Activated CD4-positive, alpha-beta T cell treated with anti-CD3 and anti-CD28 coated beads, Interleukin-2, amount 10 ng/mL, durations not matched to agents 24 days and 14 days (primary cell): ENCODE measurements at regions of chr16 and their contacts with region 1.

Region 1: GRCh38 chr16:87203060-87203656 is 114.0 kb downstream of the C16orf95 start:
- DNase-seq: peak; percentile 85
- H3K4me3 Mint-ChIP-seq: no peak overlapping the region
- H3K27ac Mint-ChIP-seq: no peak overlapping the region
- H3K4me1 Mint-ChIP-seq: peaks cover 2% of the 10 kb centered on the region
- H3K27me3 Mint-ChIP-seq: peaks cover 6% of the 10 kb centered on the region

Region 2: GRCh38 chr16:87278191-87279095 is 75.3 kb after region 1 on chr16:
- intact Hi-C with region 1: loop called (anchors 1 kb)
- DNase-seq: peak; percentile 86
- H3K4me3 Mint-ChIP-seq: no peak overlapping the region
- H3K27ac Mint-ChIP-seq: no peak overlapping the region
- H3K4me1 Mint-ChIP-seq: peaks cover 11% of the 10 kb centered on the region
- H3K27me3 Mint-ChIP-seq: no peaks in the 10 kb centered on the region